Activated T-helper 1 cell treated with anti-CD3 and anti-CD28 coated beads, Interleukin-12 subunit alpha, Interleukin-12 subunit beta, Interleukin-2, Interleukin-4 antibody, amounts not matched to agents 30 ng/mL and 10 ng/mL and 1 ng/mL, durations not matched to agents 14 hours and 24 hours and 36 hours (primary cell): ENCODE measurements at regions of chr3 and their contacts with region 1.

Region 1: DNA sequence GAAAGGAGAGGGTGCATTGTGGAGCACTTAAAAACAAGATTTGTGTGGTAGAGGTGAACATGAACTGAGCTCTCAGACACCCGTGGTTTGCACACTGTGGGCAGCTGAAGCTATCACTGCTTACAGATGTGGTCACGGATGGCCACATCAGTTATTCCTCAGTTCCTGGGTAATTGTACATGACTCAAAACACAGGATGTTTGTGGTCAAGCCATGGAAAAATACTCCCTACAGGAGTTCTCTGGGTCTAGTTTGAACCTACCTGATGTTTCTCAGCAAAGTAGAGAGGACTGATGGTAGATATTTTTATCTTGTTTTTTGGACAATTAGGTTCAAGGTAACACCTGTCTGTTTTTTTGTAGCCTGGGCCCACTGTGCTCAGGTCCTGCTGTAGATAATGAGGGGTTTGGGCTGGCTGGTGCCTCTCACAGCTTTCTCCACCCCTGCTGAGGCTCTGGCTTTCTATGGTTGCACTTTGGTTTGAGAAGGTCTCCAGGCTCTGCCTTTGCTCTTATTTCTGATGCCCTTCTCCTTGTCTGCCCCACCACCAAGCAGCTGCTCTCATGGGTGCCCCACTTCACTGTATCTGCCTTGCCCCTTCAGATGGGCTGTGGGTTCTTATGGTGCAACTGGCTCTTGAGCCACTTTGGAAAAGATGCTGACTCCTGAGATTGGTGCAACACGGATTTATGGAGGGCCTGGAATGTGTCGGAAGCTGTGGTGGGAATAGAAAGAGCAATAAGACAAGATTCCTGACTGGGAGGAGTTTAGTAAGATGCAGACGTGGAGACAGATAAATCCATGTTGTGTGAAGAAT is 40.1 kb downstream of the CDCP1 start:
- DNase-seq: peak; percentile 78
- H3K4me3 Mint-ChIP-seq: peak overlapping the region; percentile 49
- H3K27ac Mint-ChIP-seq: peak overlapping the region; percentile 69
- H3K4me1 Mint-ChIP-seq: peaks cover 69% of the 10 kb centered on the region
- H3K27me3 Mint-ChIP-seq: peaks cover 29% of the 10 kb centered on the region

Region 2: DNA sequence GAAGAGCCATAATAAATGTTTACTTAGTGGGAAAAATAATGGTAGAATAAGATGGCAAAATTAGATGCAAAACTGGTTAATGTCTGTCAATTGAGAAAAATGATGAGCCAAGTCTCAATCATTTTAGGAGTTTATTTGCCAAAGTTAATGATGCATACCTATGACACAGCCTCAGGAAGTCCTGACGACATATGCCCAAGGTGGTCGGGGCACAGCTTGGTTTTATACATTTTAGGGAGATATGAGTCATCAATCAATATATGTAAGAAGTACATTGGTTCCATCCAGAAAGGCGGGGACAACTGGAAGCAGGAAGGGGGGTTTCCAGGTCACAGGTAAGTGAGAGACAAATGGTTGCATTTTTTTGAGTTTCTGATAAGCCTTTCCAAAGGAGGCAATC is 48.5 kb before region 1 on chr3:
- intact Hi-C with region 1: no loop called
- DNase-seq: no peak
- H3K4me3 Mint-ChIP-seq: no peak overlapping the region
- H3K27ac Mint-ChIP-seq: no peak overlapping the region
- H3K4me1 Mint-ChIP-seq: peaks cover 30% of the 10 kb centered on the region
- H3K27me3 Mint-ChIP-seq: peaks cover 4% of the 10 kb centered on the region

Region 3: DNA sequence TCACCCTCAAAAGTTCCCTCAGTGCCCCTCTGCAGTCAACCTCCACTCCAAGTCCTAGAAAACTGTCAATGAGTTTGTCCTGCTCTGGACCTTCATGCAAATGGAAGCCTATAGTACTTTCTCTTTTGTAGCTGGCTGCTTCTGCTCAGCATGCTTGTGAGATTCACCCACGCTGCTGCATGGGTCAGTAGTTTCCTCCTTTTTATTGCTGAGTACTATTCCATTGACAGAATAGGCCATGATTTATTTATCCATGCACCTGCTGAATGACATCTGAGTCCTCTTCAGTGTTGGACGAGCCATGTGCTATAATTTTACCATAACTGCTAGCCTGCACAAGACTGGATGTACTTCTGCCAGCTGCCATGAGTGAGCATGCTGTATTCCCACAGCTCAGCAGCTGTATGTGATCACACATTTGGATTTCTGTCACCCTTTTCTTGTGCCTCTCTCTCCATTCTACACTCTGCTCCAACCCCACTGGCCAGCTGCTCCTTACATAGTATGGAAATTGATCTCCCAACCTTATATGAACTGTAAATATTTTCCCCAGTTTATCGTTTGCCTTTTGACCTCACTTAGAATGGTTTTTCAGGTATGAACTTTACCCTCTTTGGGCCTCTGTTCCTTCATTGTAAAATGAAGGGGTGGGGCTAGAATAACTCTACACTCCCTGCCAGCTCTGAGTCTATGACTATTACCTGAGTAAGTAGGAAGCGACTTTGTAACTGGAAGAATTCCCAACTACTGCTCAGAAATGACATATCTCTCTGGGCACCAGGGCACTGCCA is 14.0 kb after region 1 on chr3:
- intact Hi-C with region 1: loop called (anchors 2 kb)
- DNase-seq: no peak
- H3K4me3 Mint-ChIP-seq: no peak overlapping the region
- H3K27ac Mint-ChIP-seq: no peak overlapping the region
- H3K4me1 Mint-ChIP-seq: peaks cover 37% of the 10 kb centered on the region
- H3K27me3 Mint-ChIP-seq: peaks cover 63% of the 10 kb centered on the region

Region 4: DNA sequence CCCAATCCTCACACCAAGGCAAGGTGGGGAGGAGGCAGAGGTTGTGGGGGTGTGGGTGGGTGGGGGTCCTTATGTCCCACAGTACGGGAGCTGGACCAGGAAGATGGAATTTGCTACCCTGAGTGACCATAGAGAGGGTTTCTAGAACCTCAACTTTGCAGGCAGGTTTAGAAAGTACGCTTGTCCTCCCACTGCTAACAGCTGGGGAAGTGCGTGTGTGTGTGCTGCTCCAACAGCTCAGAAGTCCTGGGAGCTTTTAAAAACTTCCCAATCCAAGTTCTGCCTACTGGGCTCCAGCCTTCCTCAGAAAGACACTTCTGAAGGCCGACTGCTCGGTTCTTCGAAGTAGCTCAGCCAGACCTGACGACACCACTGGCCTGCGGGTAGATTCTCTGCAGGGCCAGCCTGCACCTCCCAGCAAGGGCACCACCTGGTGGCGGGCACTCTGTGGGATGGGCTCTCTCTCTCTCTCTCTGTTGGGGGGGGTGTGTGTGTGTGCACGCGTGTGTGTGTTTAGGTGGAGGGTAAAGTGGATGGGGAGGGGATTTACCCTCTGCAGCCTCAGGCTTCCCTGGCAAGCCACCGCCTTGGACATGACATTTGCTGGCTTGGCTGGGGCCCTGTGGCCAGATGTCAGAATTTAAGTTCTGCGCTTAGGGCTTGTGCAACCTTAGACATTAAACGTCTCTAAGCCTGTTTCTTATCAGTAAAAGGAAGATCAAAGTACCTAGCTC is 104.4 kb after region 1 on chr3:
- intact Hi-C with region 1: loop called (anchors 2 kb)
- DNase-seq: peak; percentile 67
- H3K4me3 Mint-ChIP-seq: no peak overlapping the region
- H3K27ac Mint-ChIP-seq: no peak overlapping the region
- H3K4me1 Mint-ChIP-seq: peaks cover 14% of the 10 kb centered on the region
- H3K27me3 Mint-ChIP-seq: peaks cover 29% of the 10 kb centered on the region

Region 5: DNA sequence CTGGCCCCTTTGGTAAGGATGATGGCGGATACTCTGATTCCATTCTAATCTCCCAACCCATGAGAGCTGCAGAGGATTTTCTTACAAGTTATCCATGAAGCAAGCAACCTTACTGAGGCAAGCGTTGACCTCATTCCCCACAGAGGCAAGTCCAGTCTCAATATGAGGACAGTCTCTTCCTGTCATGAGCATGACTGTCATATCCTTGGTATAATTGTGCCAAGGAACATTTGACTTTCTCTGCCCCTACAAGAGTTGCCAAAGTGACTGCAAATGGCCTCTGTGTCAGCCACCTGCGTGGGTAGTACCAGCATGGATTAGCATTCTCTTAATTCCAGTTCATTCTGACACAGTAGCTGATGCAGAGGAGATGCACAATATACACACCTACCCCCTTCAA is 191.3 kb after region 1 on chr3:
- intact Hi-C with region 1: no loop called
- DNase-seq: no peak
- H3K4me3 Mint-ChIP-seq: no peak overlapping the region
- H3K27ac Mint-ChIP-seq: no peak overlapping the region
- H3K4me1 Mint-ChIP-seq: no peaks in the 10 kb centered on the region
- H3K27me3 Mint-ChIP-seq: peaks cover 13% of the 10 kb centered on the region

Region 6: DNA sequence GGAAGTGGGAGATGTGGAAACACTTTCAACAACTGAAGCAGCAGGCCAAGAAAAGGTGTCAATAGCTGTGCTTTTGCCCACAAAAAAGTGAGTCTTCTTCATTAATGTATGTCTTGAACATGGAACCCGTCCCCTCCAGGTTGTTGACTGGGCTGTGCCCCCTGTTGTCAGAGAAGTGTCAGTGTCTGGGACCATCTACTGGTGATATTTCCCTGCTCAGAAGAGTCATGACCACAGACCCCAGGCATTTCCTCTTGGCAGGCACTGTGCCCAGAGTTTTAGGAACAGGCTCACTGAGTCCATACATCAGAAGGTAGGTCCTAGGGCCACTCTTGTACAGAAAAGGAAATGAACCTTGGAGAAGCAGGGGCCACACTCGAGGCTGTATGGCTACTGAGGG is 227.5 kb after region 1 on chr3:
- intact Hi-C with region 1: no loop called
- DNase-seq: no peak
- H3K4me3 Mint-ChIP-seq: no peak overlapping the region
- H3K27ac Mint-ChIP-seq: no peak overlapping the region
- H3K4me1 Mint-ChIP-seq: no peaks in the 10 kb centered on the region
- H3K27me3 Mint-ChIP-seq: peaks cover 4% of the 10 kb centered on the region

Region 7: GRCh38 chr3:45464336-45465170 is 358.5 kb after region 1 on chr3:
- intact Hi-C with region 1: loop called (anchors 5 kb)
- DNase-seq: peak; percentile 8
- H3K4me3 Mint-ChIP-seq: no peak overlapping the region
- H3K27ac Mint-ChIP-seq: no peak overlapping the region
- H3K4me1 Mint-ChIP-seq: peaks cover 33% of the 10 kb centered on the region
- H3K27me3 Mint-ChIP-seq: no peaks in the 10 kb centered on the region